PC-3 (cell line): ENCODE measurements at regions of chr3 and their contacts with region 1.

Region 1: DNA sequence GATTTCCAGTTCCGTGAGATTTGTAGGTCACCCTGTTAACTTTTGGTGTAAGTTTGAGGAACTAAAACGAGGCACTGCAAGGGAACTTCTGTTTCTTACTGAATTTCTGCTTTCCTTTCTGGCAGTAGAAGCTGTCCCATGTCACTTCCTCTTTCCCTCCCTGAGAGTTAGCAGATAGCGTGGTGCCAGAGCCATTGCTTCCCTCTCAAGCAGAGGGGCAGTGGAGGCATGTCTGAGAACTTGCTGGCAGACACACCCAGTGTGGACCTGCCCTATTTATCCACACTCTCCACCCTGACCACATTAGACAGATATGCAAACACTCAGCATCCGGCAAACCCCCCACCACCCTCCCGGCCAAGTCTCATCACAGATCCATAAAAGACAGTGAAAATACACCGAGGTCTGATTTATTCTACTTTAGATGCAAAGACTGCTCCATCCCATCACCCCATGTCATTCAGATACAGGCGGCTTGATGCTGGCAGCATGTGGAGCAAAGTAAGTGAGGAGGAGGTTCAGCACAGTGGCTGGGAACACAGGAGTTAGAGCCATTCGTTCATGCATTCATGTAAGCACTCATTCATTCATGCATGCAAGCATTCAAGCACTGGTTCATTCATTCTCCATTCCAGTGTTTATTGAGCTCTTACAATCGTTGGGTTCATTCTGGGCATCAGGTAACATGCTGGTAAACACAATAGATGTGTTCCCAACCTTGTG is 324.7 kb downstream of the SHQ1 start:
- DNase-seq: peak; percentile 66
- ATAC-seq: peak; percentile 84
- H3K4me3 ChIP-seq: peak overlapping the region; percentile 11; the same call in 1 of the 2 replicates
- H3K27ac ChIP-seq: peak overlapping the region; percentile 57
- H3K4me1 ChIP-seq: peaks cover 44% of the 10 kb centered on the region
- H3K27me3 ChIP-seq: no peaks in the 10 kb centered on the region
- CTCF ChIP-seq: no peak

Region 2: DNA sequence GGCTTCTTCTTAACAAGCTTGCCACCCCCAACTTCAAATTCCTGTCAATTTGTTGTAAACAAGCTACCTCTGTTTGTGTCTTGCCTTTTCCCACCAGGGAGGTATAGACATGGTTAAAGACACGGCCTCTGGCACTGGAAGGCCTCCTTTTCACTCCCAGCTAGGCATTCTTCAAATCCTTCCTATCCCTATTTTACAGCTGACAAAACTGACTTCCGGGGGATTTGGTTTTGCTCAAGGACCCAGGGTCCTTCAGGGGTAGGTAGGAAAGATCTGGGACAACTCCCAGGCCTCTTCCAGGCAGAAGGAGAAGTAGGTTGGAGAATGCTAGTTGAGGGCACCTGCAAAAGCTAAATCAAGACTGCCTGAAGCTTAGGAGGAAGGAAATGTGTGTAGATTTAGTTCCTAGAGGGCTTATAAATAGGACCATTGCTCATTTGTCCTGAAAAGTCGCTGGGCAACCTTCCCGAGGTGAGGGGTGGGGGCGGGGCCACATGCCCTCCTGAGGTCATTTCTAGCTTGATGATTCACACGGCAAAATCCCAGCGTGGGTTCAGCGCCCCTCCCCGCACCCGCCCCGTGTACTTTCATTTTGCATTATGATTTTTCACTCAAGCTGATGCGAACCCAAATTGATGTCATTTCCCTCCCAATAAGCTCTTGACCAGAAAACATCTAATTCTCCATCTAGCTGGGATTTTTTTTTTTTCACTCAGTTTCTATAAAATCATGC is 40.8 kb before region 1 on chr3:
- CTCF ChIA-PET with region 1: no interaction called
- POLR2A ChIA-PET with region 1: no interaction called
- intact Hi-C with region 1: loop called (anchors 1 kb)
- DNase-seq: peak; percentile 80
- ATAC-seq: peak; percentile 21
- H3K4me3 ChIP-seq: peak overlapping the region; percentile 71
- H3K27ac ChIP-seq: peak overlapping the region; percentile 37
- H3K4me1 ChIP-seq: peaks cover 23% of the 10 kb centered on the region
- H3K27me3 ChIP-seq: no peaks in the 10 kb centered on the region
- CTCF ChIP-seq: no peak

Region 3: DNA sequence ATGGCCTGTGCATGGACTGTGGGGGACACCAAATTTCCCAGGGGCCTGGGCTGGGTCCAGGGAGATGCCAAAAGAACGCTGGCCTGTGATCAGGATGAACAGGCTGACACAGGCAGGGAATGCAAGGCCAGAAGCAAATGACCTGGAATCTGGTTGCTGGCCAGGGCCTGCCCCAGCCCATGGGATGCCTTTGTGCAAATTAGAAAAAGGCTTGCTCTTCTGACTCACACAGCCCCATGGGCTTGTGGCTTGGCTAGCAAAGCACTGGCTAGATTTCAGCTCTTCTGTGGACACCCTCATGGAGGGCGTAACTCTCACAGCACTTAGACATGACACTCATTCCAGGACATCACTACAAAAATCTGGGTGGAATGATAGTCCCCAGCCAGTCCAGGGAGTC is 31.4 kb before region 1 on chr3:
- CTCF ChIA-PET with region 1: no interaction called
- POLR2A ChIA-PET with region 1: no interaction called
- intact Hi-C with region 1: loop called (anchors 1 kb)
- DNase-seq: peak; percentile 94
- ATAC-seq: peak; percentile 84
- H3K4me3 ChIP-seq: no peak overlapping the region
- H3K27ac ChIP-seq: no peak overlapping the region
- H3K4me1 ChIP-seq: peaks cover 31% of the 10 kb centered on the region
- H3K27me3 ChIP-seq: no peaks in the 10 kb centered on the region
- CTCF ChIP-seq: no peak

Region 4: DNA sequence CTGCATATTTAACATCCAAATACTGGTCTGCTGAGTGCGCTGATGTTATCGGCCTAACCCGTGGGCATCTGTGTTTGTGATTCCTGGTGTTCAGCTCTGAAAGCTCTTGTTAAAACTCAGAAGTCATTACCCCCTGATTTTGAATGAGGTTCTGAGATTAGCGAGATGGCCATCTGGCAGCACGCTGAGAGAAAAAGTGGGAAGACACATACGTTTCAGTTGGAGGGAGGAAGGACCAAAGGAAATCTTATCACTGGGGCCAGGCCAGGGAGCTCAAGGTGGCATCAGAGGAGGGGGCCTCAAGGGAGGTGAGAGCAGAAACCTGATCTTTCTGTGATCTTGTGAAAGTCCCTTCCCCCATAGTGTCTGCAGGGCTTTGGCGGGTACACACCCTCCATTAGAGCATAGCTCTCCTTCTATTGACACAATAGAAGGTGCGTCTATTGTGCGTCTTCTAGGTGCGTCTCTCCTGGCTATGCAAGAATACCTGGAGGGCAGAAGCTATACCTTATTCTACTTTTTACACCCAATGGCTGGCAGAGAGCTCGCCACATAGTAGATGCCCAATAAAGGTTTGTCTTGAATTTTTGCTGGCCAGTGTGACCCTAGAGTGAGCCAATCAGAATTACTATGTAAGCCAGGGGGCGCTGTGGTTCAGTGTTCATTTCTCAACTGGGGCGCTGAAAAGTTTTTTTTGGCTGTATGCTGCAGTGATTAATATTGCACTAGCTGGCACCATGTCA is 142.3 kb after region 1 on chr3:
- CTCF ChIA-PET with region 1: no interaction called
- POLR2A ChIA-PET with region 1: no interaction called
- intact Hi-C with region 1: loop called (anchors 2 kb)
- DNase-seq: peak; percentile 73
- ATAC-seq: peak; percentile 60
- H3K4me3 ChIP-seq: no peak overlapping the region
- H3K27ac ChIP-seq: no peak overlapping the region
- H3K4me1 ChIP-seq: peaks cover 9% of the 10 kb centered on the region
- H3K27me3 ChIP-seq: no peaks in the 10 kb centered on the region
- CTCF ChIP-seq: peak; percentile 85

Region 5: GRCh38 chr3:72722930-72723726 is 199.5 kb after region 1 on chr3:
- CTCF ChIA-PET with region 1: no interaction called
- POLR2A ChIA-PET with region 1: no interaction called
- intact Hi-C with region 1: no loop called
- DNase-seq: peak; percentile 92
- ATAC-seq: peak; percentile 71
- H3K4me3 ChIP-seq: peak overlapping the region; percentile 6; the same call in 1 of the 2 replicates
- H3K27ac ChIP-seq: peak overlapping the region; percentile 96
- H3K4me1 ChIP-seq: peaks cover 25% of the 10 kb centered on the region
- H3K27me3 ChIP-seq: no peaks in the 10 kb centered on the region
- CTCF ChIP-seq: 0 out of 2 replicates have a peak, but pooled peaks have one; percentile 17

Region 6: GRCh38 chr3:72912532-72912931 is 388.9 kb after region 1 on chr3:
- CTCF ChIA-PET with region 1: no interaction called
- POLR2A ChIA-PET with region 1: interaction called, 18 read pairs
- intact Hi-C with region 1: no loop called
- DNase-seq: no peak
- ATAC-seq: no peak
- H3K4me3 ChIP-seq: no peak overlapping the region
- H3K27ac ChIP-seq: no peak overlapping the region
- H3K4me1 ChIP-seq: peaks cover 9% of the 10 kb centered on the region; the same call in 1 of the 2 replicates
- H3K27me3 ChIP-seq: no peaks in the 10 kb centered on the region
- CTCF ChIP-seq: no peak